Left colon (tissue), 2 donors: ENCODE measurements at regions of chr12 and their contacts with region 1.

Region 1: DNA sequence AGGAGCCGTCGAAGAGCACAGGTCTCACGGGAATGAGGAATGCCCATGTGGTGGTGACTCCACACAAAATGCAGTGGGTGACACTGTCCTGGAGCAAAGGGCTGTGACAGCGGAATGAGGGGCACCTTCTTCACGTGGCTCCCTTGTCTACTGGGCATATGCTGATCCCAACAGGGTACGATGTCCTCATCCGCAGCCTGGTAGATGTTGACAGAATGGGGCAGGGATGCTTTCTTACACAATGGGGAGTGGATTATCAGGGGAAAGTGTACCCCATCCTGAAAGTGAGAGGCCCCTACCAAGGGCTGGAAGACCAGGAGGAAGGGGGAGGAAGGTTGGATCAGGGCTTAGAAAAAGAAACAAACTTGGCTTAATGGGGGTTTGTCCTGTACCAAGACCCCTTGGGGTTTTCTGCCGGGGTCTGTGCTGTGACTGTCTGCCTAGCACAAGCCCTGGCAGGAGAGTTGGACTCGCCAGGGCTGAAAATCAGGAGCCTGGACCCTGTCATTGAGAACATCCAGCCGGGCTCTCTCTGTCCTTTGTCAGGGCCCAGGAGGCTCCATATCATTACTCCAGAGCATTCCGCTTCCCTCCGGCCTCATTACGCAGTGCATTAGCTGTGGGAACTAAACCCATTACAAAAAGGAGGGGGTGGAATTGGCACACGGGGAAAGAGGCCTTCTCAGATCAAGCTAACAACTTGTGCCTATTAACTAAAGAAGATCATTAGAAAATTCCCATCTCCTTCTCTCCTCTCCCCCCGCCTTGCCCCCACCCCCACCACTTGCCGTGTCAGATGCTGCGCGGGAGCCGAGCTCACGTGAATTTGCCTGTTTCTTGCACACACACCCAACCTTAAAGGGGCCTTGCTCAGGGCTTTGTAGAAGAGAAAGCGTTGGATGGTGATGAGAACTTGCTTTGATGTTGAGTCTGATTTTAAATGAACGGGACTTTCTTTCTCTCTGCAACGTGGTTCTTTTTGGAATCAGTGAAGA is 171.8 kb upstream of the PARP11 start:
- DNase-seq: no peak
- ATAC-seq: no peak

Region 2: GRCh38 chr12:3333583-3333982 is 711.5 kb before region 1 on chr12:
- intact Hi-C with region 1: no loop called
- DNase-seq: no peak
- ATAC-seq: no peak

Region 3: GRCh38 chr12:3885277-3886094 is 159.5 kb before region 1 on chr12:
- intact Hi-C with region 1: loop called in 1 of 2 experiments (anchors 5 kb)
- DNase-seq: no peak
- ATAC-seq: peak; percentile 40

Region 4: DNA sequence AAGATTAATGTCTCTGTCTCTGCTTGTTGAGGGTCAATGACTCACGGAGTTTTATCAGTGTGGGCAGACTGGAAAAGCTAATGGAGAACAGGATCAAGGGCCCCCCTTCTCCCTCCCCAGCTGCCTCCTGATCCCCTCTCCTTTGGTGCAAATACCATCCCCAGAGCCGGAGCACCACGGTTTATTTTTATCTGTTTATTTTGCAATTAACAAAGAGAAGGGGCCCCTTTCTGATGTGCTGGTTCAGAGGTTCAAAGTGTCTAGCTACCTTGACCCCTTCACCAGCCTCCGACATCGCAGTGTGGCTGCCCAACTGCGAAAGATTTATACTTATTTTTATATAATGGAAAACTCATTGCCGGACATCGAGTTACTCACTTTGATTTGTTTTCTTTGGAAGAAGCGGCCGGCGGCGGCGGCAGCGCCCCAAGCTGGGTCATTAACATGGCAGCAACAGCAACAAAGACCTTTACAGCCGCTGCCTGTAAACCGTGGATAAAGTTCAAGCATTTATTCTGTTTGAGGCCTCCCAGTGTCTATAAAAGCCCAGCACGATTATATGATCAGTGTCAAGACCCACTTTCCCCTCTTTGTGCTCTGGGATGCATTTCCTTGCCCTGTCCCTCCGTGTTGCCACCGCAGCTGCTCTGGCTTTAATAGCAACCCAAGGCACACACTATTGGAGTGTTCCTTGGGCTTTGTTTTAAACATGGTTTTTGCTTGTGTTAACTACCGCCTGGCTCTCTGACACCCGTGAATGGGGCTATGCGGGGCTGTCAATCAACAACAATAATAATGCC is 124.5 kb before region 1 on chr12:
- intact Hi-C with region 1: no loop called
- DNase-seq: peak in 1 of 2 donors; percentile 14
- ATAC-seq: peak; percentile 66

Region 5: GRCh38 chr12:4107436-4107878 is 62.4 kb after region 1 on chr12:
- intact Hi-C with region 1: no loop called
- DNase-seq: peak; percentile 36 to 53
- ATAC-seq: peak; percentile 94